PC-3 (cell line): ENCODE measurements at regions of chr17 and their contacts with region 1.

Region 1: GRCh38 chr17:76557368-76558197 is 17.7 kb downstream of the PRCD start:
- DNase-seq: peak; percentile 99
- ATAC-seq: peak; percentile 84
- H3K4me3 ChIP-seq: peak overlapping the region; percentile 91
- H3K27ac ChIP-seq: peak overlapping the region; percentile 82
- H3K4me1 ChIP-seq: peaks cover 42% of the 10 kb centered on the region
- H3K27me3 ChIP-seq: no peaks in the 10 kb centered on the region
- CTCF ChIP-seq: peak; percentile 56

Region 2: GRCh38 chr17:76414334-76415295 is 143.0 kb before region 1 on chr17:
- CTCF ChIA-PET with region 1: no interaction called
- POLR2A ChIA-PET with region 1: no interaction called
- intact Hi-C with region 1: no loop called
- DNase-seq: no peak
- ATAC-seq: no peak
- H3K4me3 ChIP-seq: no peak overlapping the region
- H3K27ac ChIP-seq: no peak overlapping the region
- H3K4me1 ChIP-seq: no peaks in the 10 kb centered on the region
- H3K27me3 ChIP-seq: no peaks in the 10 kb centered on the region
- CTCF ChIP-seq: no peak

Region 3: DNA sequence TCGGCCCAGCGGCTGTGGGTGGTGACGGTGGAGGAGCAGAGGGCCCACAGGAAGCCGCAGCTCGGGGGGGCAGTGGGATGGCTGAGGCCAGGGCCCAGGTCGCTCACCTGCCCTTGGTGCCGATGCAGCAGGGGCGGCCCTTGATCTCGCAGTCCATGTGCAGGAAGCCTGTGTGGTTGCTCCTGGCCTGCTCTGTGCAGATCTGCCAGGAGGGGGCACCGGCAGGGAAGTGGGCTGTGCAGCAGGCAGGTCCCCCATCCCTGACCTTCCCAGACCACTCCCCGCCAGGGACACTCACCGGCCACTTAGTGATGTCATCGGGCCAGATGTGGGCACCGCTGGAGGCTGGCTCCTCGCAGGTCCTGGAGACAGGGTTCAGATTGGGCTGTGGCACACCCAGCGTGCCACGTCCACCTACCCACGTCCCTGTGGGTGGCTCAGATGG is 84.0 kb before region 1 on chr17:
- CTCF ChIA-PET with region 1: no interaction called
- POLR2A ChIA-PET with region 1: no interaction called
- intact Hi-C with region 1: no loop called
- DNase-seq: no peak
- ATAC-seq: peak; percentile 45
- H3K4me3 ChIP-seq: no peak overlapping the region
- H3K27ac ChIP-seq: no peak overlapping the region
- H3K4me1 ChIP-seq: no peaks in the 10 kb centered on the region; the same call in 1 of the 2 replicates
- H3K27me3 ChIP-seq: no peaks in the 10 kb centered on the region
- CTCF ChIP-seq: peak; percentile 62

Region 4: DNA sequence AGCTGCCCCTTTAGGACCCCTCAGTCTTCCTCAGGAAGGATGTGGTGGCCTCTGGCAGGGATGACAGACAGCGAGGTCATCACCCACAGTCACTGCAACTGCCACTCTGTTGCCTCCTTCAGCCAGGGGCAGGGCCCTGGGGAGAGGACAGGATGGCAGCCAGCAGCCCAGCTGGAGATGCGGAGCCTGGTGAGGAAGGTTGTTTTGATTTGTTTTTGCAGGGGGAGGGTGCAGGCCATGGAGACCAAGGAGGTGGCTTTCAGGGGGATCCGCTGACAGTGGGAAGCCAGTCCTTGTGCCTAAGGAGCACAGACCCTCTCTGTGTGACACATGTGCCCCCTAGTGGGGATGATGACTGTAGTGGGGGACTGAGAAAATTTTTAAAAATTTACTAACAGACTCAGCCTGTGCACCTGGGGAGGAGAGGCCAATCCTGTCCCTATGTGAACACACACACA is 10.4 kb before region 1 on chr17:
- CTCF ChIA-PET with region 1: interaction called, 10 read pairs
- POLR2A ChIA-PET with region 1: interaction called, 11 read pairs
- intact Hi-C with region 1: loop called (anchors 1 kb)
- DNase-seq: peak; percentile 80
- ATAC-seq: peak; percentile 61
- H3K4me3 ChIP-seq: peak overlapping the region; percentile 22; the same call in 1 of the 2 replicates
- H3K27ac ChIP-seq: peak overlapping the region; percentile 97
- H3K4me1 ChIP-seq: peaks cover 35% of the 10 kb centered on the region
- H3K27me3 ChIP-seq: no peaks in the 10 kb centered on the region
- CTCF ChIP-seq: peak; percentile 90

Region 5: GRCh38 chr17:76578344-76578979 is 20.9 kb after region 1 on chr17:
- CTCF ChIA-PET with region 1: no interaction called
- POLR2A ChIA-PET with region 1: interaction called, 3 read pairs
- intact Hi-C with region 1: loop called (anchors 2 kb)
- DNase-seq: peak; percentile 84
- ATAC-seq: peak; percentile 99
- H3K4me3 ChIP-seq: peak overlapping the region; percentile 22; the same call in 1 of the 2 replicates
- H3K27ac ChIP-seq: peak overlapping the region; percentile 73
- H3K4me1 ChIP-seq: peaks cover 13% of the 10 kb centered on the region
- H3K27me3 ChIP-seq: no peaks in the 10 kb centered on the region
- CTCF ChIP-seq: no peak

Region 6: GRCh38 chr17:76585818-76586593 is 28.4 kb after region 1 on chr17 and contains the start of gene ST6GALNAC2:
- CTCF ChIA-PET with region 1: interaction called, 11 read pairs
- POLR2A ChIA-PET with region 1: no interaction called
- intact Hi-C with region 1: loop called (anchors 1 kb)
- DNase-seq: peak; percentile 84
- ATAC-seq: peak; percentile 94
- H3K4me3 ChIP-seq: peak within 1 kb of the TSS; percentile 80
- H3K27ac ChIP-seq: no peak within 1 kb of the TSS
- H3K4me1 ChIP-seq: 0 out of 2 replicates have a peak, but pooled peaks cover 4% of the 10 kb centered on the region
- H3K27me3 ChIP-seq: no peaks in the 10 kb centered on the region
- CTCF ChIP-seq: peak; percentile 60
- total RNA-seq, gene ST6GALNAC2: 1.0 and 6.4 TPM in 2 replicates

Region 7: GRCh38 chr17:76623271-76624146 is 65.9 kb after region 1 on chr17:
- CTCF ChIA-PET with region 1: interaction called, 10 read pairs
- POLR2A ChIA-PET with region 1: interaction called, 4 read pairs
- intact Hi-C with region 1: loop called (anchors 1 kb)
- DNase-seq: peak; percentile 83
- ATAC-seq: peak; percentile 94
- H3K4me3 ChIP-seq: peak overlapping the region; percentile 6; the same call in 1 of the 2 replicates
- H3K27ac ChIP-seq: no peak overlapping the region
- H3K4me1 ChIP-seq: peaks cover 9% of the 10 kb centered on the region
- H3K27me3 ChIP-seq: no peaks in the 10 kb centered on the region
- CTCF ChIP-seq: peak; percentile 95

Region 8: DNA sequence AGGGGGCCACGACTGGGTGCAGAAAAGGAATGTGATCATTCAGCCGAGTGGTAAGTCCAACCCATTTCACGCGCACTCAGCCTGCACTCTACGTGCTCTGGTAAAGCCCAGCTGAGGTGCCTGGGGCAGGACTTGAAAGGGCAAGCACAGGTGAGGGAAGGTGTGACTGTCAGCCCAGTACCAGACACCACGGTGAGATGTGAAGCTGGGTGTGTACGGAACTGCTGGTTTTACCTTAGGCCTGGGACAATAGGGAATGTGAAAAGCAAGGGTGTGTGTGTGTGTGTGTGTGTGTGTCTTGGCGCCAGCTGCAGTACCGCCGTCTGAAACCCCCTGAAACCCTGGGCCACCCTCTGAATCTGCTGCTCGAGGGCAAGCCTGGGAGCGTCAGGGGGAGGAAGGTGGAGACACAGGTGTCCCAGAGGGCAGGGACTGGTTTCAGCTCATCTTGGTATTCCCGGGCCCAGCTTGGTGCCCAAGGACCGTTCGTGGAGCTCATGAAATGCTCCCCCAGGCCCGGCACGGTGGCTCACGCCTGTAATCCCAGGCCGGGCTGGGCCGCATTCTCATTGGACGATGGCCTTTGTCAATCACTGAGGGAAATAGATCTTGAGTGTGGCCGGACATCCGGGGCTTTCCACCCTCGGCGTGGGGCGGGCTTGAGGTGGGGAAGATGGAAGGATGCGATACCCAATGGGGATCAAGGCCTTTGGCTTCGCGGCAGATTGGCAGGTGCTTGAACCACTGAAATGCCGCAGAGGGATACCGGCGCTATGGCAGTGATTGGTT is 113.7 kb after region 1 on chr17:
- CTCF ChIA-PET with region 1: no interaction called
- POLR2A ChIA-PET with region 1: interaction called, 3 read pairs
- intact Hi-C with region 1: loop called (anchors 5 kb)
- DNase-seq: peak; percentile 100
- ATAC-seq: peak; percentile 99
- H3K4me3 ChIP-seq: peak overlapping the region; percentile 72
- H3K27ac ChIP-seq: no peak overlapping the region
- H3K4me1 ChIP-seq: peaks cover 14% of the 10 kb centered on the region
- H3K27me3 ChIP-seq: no peaks in the 10 kb centered on the region
- CTCF ChIP-seq: no peak

Region 9: GRCh38 chr17:76681222-76682137 is 123.9 kb after region 1 on chr17:
- CTCF ChIA-PET with region 1: interaction called, 6 read pairs
- POLR2A ChIA-PET with region 1: no interaction called
- intact Hi-C with region 1: loop called (anchors 1 kb)
- DNase-seq: peak; percentile 83
- ATAC-seq: peak; percentile 86
- H3K4me3 ChIP-seq: no peak overlapping the region
- H3K27ac ChIP-seq: no peak overlapping the region
- H3K4me1 ChIP-seq: no peaks in the 10 kb centered on the region
- H3K27me3 ChIP-seq: no peaks in the 10 kb centered on the region
- CTCF ChIP-seq: peak; percentile 96

Region 10: DNA sequence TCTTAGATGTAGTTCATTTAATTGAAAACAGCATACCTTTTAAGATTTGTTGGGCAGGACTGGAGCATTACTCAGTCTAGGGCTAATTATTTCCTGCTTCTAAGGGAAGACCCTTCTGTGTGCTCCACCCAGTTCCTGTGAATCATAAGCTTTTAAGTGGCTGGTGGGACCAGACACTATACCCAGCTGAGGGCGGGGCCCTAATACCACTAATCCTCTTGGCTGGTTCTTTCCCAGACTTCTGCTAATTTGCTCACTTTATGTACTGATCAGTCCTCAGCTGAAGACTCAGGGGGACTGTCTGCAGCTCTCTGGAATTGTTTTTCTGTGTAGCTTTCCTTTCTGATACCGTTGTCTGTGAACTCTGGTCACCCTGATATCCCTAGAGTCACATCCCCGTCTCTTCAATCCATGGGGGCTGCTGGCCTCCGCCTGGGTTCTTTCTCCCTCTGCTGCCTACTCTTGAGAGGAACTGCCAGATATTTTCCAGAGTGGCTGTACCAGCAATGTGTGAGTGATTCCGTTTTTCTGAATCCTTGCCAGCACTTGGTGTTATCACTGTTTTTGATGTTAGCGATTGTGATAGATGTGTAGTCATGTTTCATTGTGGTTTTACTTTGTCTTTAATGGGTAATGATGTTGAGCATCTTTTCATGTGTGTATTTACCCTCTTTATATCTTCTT is 215.4 kb after region 1 on chr17:
- CTCF ChIA-PET with region 1: no interaction called
- POLR2A ChIA-PET with region 1: no interaction called
- intact Hi-C with region 1: no loop called
- DNase-seq: peak; percentile 85
- ATAC-seq: peak; percentile 100
- H3K4me3 ChIP-seq: no peak overlapping the region
- H3K27ac ChIP-seq: peak overlapping the region; percentile 51
- H3K4me1 ChIP-seq: peaks cover 10% of the 10 kb centered on the region
- H3K27me3 ChIP-seq: no peaks in the 10 kb centered on the region
- CTCF ChIP-seq: no peak